CD4-positive, alpha-beta T cell (primary cell): ENCODE measurements at regions of chr2 and their contacts with region 1.

Region 1: DNA sequence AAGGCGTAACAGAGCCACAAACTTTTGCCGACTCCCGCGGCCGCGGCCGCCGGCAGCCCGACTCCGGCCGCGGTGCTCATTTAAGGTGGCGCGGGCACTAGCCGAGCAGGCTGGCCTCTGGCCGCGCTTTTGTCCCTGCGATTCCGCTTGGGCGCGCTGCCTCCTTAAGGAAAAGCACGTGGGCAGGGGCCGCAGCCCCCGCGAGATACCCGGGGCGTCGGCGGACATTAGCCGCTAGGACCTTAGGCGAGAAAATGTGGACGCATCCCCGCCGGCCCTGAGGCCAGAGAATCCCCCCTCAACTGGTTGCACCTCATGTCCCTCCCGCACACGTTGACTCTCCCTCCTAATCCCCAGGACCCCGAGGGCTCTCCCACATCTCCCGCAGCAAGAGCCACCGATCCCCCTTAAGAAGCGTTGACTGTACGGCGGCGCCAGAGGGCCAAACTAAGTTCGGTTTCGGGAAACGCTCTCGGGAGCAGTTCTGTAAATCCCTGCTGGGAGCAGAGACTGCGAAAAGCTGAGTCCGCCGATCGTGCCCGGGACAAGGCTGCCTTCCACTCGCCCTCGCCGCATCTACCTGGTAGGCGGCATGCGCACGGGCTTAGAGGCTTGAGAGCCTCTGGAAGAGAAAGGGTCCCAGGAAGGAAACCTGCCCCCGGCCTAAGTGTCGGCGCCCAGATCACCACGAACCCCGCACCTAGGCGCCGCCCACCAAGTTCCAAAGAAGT is 1.7 kb upstream of the SATB2 start:
- DNase-seq: peak; percentile 34 to 77 (median 52)
- ATAC-seq: peak; percentile 31
- H3K4me3 ChIP-seq: peak overlapping the region; percentile 93
- H3K4me3 Mint-ChIP-seq: peak overlapping the region; percentile 94
- H3K27ac ChIP-seq: no peak overlapping the region
- H3K27ac Mint-ChIP-seq: peak overlapping the region; percentile 52
- H3K4me1 ChIP-seq: peaks cover 65% of the 10 kb centered on the region
- H3K4me1 Mint-ChIP-seq: peaks cover 31% of the 10 kb centered on the region
- H3K27me3 ChIP-seq: peaks cover 61 to 79% of the 10 kb centered on the region in 2 experiments
- H3K27me3 Mint-ChIP-seq: peaks cover 81% of the 10 kb centered on the region
- CTCF ChIP-seq: no peak

Region 2: DNA sequence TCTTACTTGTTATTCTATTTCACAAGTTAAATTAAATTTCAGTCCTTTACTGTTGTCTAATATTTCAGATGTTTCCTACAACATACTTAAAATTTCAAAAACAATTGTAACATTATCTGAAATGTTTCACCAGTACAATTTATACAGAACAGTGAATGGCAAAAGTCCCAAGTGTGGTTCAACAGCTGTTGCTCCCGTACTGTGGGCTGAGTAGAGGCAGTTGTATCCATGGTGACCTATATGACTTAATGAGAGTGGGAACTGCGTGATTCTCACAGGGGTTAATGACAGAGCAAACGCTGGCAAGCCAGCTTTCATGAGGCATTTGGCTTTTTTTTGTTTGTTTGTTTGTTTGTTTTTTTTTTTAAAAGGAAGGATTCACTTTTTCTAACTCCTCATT is 1660.4 kb before region 1 on chr2:
- CTCF ChIA-PET with region 1: no interaction called
- POLR2A ChIA-PET with region 1: no interaction called
- intact Hi-C with region 1: loop called in 1 of 2 experiments (anchors 10 kb)
- DNase-seq: no peak
- ATAC-seq: no peak
- H3K4me3 ChIP-seq: no peak overlapping the region
- H3K4me3 Mint-ChIP-seq: no peak overlapping the region
- H3K27ac ChIP-seq: no peak overlapping the region
- H3K27ac Mint-ChIP-seq: no peak overlapping the region
- H3K4me1 ChIP-seq: peaks cover 8% of the 10 kb centered on the region
- H3K4me1 Mint-ChIP-seq: peaks cover 11% of the 10 kb centered on the region
- H3K27me3 ChIP-seq: no peaks in the 10 kb centered on the region
- H3K27me3 Mint-ChIP-seq: peaks cover 10% of the 10 kb centered on the region
- CTCF ChIP-seq: no peak

Region 3: GRCh38 chr2:199471443-199472057 is 12.1 kb after region 1 on chr2:
- CTCF ChIA-PET with region 1: no interaction called
- POLR2A ChIA-PET with region 1: interaction called, 3 read pairs
- intact Hi-C with region 1: loop called in 1 of 2 experiments (anchors 2 kb)
- DNase-seq: peak in 3 of 14 experiments; percentile 13 to 42 (median 40)
- ATAC-seq: no peak
- H3K4me3 ChIP-seq: no peak overlapping the region
- H3K4me3 Mint-ChIP-seq: no peak overlapping the region
- H3K27ac ChIP-seq: no peak overlapping the region
- H3K27ac Mint-ChIP-seq: no peak overlapping the region
- H3K4me1 ChIP-seq: peaks cover 37% of the 10 kb centered on the region
- H3K4me1 Mint-ChIP-seq: peaks cover 33% of the 10 kb centered on the region
- H3K27me3 ChIP-seq: peaks cover 76 to 86% of the 10 kb centered on the region in 2 experiments
- H3K27me3 Mint-ChIP-seq: peaks cover 97% of the 10 kb centered on the region
- CTCF ChIP-seq: no peak